ENCODE measurements at regions of chr22 and their contacts with region 1.

Region 1: DNA sequence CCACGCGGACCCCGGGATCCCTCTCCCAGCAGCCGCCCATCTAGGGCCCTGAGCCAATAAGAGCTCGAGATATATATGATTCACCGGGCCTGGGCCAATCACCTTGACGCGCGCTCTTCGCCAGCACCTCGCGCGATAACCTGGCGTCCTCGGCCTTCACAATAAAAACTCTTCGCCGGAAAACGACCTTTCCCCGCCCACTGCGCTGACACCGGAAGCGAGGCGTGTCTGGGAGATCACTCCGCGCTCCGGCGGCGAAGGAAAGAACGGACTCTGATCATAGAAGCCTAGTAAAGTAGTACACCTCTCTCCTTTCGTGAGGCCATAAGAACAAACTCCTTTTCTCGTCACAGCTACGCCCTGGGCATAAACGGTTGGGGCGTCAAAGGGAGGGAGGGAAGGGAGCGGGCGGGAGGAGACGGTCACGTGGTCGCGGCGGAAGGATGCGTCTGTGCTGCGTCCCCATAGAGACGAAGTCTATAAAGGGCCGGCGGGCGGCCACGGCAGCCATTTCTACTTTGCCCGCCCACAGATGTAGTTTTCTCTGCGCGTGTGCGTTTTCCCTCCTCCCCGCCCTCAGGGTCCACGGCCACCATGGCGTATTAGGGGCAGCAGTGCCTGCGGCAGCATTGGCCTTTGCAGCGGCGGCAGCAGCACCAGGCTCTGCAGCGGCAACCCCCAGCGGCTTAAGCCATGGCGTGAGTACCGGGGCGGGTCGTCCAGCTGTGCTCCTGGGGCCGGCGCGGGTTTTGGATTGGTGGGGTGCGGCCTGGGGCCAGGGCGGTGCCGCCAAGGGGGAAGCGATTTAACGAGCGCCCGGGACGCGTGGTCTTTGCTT is at the start of gene ATF4:
- DNase-seq: peak; percentile 93 to 99 (median 95)
- ATAC-seq: peak; percentile 89
- H3K4me3 ChIP-seq: peak within 1 kb of the TSS; percentile 98 to 99
- H3K4me3 Mint-ChIP-seq: peak within 1 kb of the TSS; percentile 98
- H3K27ac ChIP-seq: peak within 1 kb of the TSS; percentile 87 to 88
- H3K27ac Mint-ChIP-seq: peak within 1 kb of the TSS; percentile 99
- H3K4me1 ChIP-seq: peaks cover 48% of the 10 kb centered on the region
- H3K4me1 Mint-ChIP-seq: peaks cover 44% of the 10 kb centered on the region
- H3K27me3 ChIP-seq: no peaks in the 10 kb centered on the region
- H3K27me3 Mint-ChIP-seq: no peaks in the 10 kb centered on the region
- CTCF ChIP-seq: no peak
- total RNA-seq, gene ATF4: 327 to 329 TPM

Region 2: DNA sequence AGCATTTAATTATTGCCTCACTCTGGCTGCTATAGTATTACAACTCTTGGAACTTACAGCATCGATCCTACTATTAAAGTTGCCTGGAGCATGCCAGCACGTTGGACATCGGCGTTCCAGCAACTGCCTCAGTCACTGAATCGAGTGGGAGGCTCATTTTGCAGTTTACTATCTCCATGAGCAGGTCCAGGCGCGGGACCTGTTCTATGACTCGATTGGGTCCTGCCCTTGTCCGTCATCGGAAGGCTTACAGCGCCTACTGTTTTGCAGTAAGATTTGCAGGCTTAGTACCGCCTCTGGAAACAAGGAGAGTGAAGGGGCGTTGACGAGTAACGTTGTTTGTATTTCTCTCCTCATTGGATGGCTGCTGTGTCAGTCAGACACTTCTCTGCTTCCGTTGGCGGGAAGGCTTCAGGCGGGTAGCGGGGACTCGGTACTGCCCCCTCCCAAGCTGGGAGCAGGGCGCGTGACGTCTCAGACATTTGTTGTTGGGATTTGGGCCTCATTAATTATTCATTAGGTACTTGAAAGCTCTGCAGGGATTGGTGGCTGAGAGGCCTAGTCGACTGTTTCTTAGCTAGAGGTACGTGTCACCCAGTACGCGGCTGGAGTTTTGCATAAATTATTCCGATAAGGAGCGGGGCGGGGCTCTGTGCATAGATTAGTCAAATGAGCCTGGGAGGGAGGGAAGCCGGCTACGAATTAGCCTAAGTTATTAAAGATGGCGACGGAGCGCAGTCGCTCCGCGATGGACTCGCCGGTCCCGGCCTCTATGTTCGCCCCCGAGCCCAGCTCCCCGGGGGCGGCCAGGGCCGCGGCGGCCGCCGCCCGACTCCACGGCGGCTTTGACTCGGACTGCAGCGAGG is 814.8 kb before region 1 on chr22 and contains the start of gene GTPBP1:
- CTCF ChIA-PET with region 1: no interaction called
- POLR2A ChIA-PET with region 1: no interaction called
- intact Hi-C with region 1: loop called in 1 of 2 experiments (anchors 10 kb)
- DNase-seq: peak; percentile 91 to 100 (median 95)
- ATAC-seq: peak; percentile 76
- H3K4me3 ChIP-seq: peak within 1 kb of the TSS; percentile 63 to 84
- H3K4me3 Mint-ChIP-seq: peak within 1 kb of the TSS; percentile 93
- H3K27ac ChIP-seq: peak within 1 kb of the TSS; percentile 69 to 77
- H3K27ac Mint-ChIP-seq: peak within 1 kb of the TSS; percentile 95
- H3K4me1 ChIP-seq: peaks cover 47% of the 10 kb centered on the region
- H3K4me1 Mint-ChIP-seq: peaks cover 64% of the 10 kb centered on the region
- H3K27me3 ChIP-seq: no peaks in the 10 kb centered on the region
- H3K27me3 Mint-ChIP-seq: no peaks in the 10 kb centered on the region
- CTCF ChIP-seq: no peak
- total RNA-seq, gene GTPBP1: 341 to 346 TPM

Region 3: GRCh38 chr22:39170825-39171622 is 349.2 kb before region 1 on chr22:
- CTCF ChIA-PET with region 1: interaction called, 3 read pairs
- POLR2A ChIA-PET with region 1: interaction called, 3 read pairs
- intact Hi-C with region 1: loop called (anchors 2 to 5 kb)
- DNase-seq: peak; percentile 73 to 95 (median 85)
- ATAC-seq: peak; percentile 57
- H3K4me3 ChIP-seq: peak overlapping the region; percentile 26 to 28
- H3K4me3 Mint-ChIP-seq: peak overlapping the region; percentile 54
- H3K27ac ChIP-seq: peak overlapping the region; percentile 25 to 42
- H3K27ac Mint-ChIP-seq: peak overlapping the region; percentile 94
- H3K4me1 ChIP-seq: peaks cover 49% of the 10 kb centered on the region
- H3K4me1 Mint-ChIP-seq: peaks cover 47% of the 10 kb centered on the region
- H3K27me3 ChIP-seq: peaks cover 0 to 3% of the 10 kb centered on the region in 2 experiments
- H3K27me3 Mint-ChIP-seq: no peaks in the 10 kb centered on the region
- CTCF ChIP-seq: peak; percentile 98

Region 4: DNA sequence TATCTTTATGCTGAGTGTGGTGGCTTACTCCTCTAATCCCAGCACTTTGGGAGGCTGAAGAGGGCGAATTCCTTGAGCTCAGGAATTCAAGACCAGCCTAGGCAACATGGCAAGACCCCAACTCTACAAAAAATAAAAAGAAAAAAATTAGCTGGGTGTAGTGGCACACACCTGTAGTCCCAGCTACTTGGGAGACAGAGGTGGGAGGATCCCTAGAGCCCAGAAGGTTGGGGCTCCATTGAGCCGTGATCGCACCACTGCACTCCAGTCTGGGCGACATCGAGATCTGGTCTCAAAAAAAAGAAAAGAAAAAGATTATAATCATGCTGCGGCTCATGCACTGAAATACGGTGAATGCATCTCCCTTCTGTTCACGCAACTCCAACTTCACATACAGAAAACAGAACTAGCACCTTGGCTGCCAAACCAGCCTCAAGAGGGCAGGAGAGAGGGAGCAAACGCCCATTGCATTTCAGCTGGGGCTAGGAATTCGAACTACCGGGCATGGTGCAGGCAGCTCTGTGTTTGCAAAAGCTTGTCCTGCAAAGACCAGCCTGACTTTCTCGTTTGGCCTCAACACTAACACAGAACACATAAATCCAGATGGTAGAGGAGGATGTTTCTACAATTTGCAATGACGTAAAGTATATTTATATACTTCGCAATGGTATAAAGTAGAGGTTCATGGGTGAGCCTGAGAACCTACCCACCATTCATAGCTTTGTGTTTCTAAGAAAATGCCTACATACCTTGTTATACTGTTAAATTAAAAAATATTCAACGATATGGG is 176.8 kb before region 1 on chr22:
- CTCF ChIA-PET with region 1: interaction called, 7 read pairs
- POLR2A ChIA-PET with region 1: no interaction called
- intact Hi-C with region 1: loop called in 1 of 2 experiments (anchors 2 kb)
- DNase-seq: peak; percentile 32 to 76 (median 63)
- ATAC-seq: peak; percentile 91
- H3K4me3 ChIP-seq: no peak overlapping the region
- H3K4me3 Mint-ChIP-seq: no peak overlapping the region
- H3K27ac ChIP-seq: no peak overlapping the region
- H3K27ac Mint-ChIP-seq: no peak overlapping the region
- H3K4me1 ChIP-seq: no peaks in the 10 kb centered on the region
- H3K4me1 Mint-ChIP-seq: peaks cover 4% of the 10 kb centered on the region
- H3K27me3 ChIP-seq: no peaks in the 10 kb centered on the region
- H3K27me3 Mint-ChIP-seq: no peaks in the 10 kb centered on the region
- CTCF ChIP-seq: peak; percentile 60

Region 5: GRCh38 chr22:39490135-39490798 is 30.0 kb before region 1 on chr22:
- CTCF ChIA-PET with region 1: interaction called, 287 read pairs
- POLR2A ChIA-PET with region 1: interaction called, 15 read pairs
- intact Hi-C with region 1: loop called in 1 of 2 experiments (anchors 2 kb)
- DNase-seq: peak; percentile 58 to 89 (median 76)
- ATAC-seq: peak; percentile 99
- H3K4me3 ChIP-seq: no peak overlapping the region
- H3K4me3 Mint-ChIP-seq: peak overlapping the region; percentile 69
- H3K27ac ChIP-seq: no peak overlapping the region
- H3K27ac Mint-ChIP-seq: peak overlapping the region; percentile 67
- H3K4me1 ChIP-seq: peaks cover 7% of the 10 kb centered on the region
- H3K4me1 Mint-ChIP-seq: peaks cover 12% of the 10 kb centered on the region
- H3K27me3 ChIP-seq: no peaks in the 10 kb centered on the region
- H3K27me3 Mint-ChIP-seq: no peaks in the 10 kb centered on the region
- CTCF ChIP-seq: no peak

Region 6: GRCh38 chr22:39574779-39575551 is 54.7 kb after region 1 on chr22:
- CTCF ChIA-PET with region 1: no interaction called
- POLR2A ChIA-PET with region 1: no interaction called
- intact Hi-C with region 1: no loop called
- DNase-seq: no peak
- ATAC-seq: no peak
- H3K4me3 ChIP-seq: no peak overlapping the region
- H3K4me3 Mint-ChIP-seq: no peak overlapping the region
- H3K27ac ChIP-seq: no peak overlapping the region
- H3K27ac Mint-ChIP-seq: no peak overlapping the region
- H3K4me1 ChIP-seq: no peaks in the 10 kb centered on the region
- H3K4me1 Mint-ChIP-seq: no peaks in the 10 kb centered on the region
- H3K27me3 ChIP-seq: no peaks in the 10 kb centered on the region
- H3K27me3 Mint-ChIP-seq: peaks cover 8% of the 10 kb centered on the region
- CTCF ChIP-seq: no peak

Region 7: GRCh38 chr22:40024201-40025061 is 504.2 kb after region 1 on chr22:
- CTCF ChIA-PET with region 1: interaction called, 16 read pairs
- POLR2A ChIA-PET with region 1: no interaction called
- intact Hi-C with region 1: no loop called
- DNase-seq: peak; percentile 20 to 78 (median 64)
- ATAC-seq: peak; percentile 72
- H3K4me3 ChIP-seq: no peak overlapping the region
- H3K4me3 Mint-ChIP-seq: no peak overlapping the region
- H3K27ac ChIP-seq: no peak overlapping the region
- H3K27ac Mint-ChIP-seq: no peak overlapping the region
- H3K4me1 ChIP-seq: peaks cover 6% of the 10 kb centered on the region
- H3K4me1 Mint-ChIP-seq: peaks cover 5% of the 10 kb centered on the region
- H3K27me3 ChIP-seq: no peaks in the 10 kb centered on the region
- H3K27me3 Mint-ChIP-seq: no peaks in the 10 kb centered on the region
- CTCF ChIP-seq: peak; percentile 80

Region 8: GRCh38 chr22:41285820-41286638 is 1765.8 kb after region 1 on chr22 and contains the start of gene RANGAP1:
- CTCF ChIA-PET with region 1: no interaction called
- POLR2A ChIA-PET with region 1: no interaction called
- intact Hi-C with region 1: loop called in 1 of 2 experiments (anchors 5 kb)
- DNase-seq: peak; percentile 96 to 100 (median 98)
- ATAC-seq: peak; percentile 86
- H3K4me3 ChIP-seq: peak within 1 kb of the TSS; percentile 76 to 99
- H3K4me3 Mint-ChIP-seq: peak within 1 kb of the TSS; percentile 92
- H3K27ac ChIP-seq: peak within 1 kb of the TSS; percentile 87 to 95
- H3K27ac Mint-ChIP-seq: peak within 1 kb of the TSS; percentile 98
- H3K4me1 ChIP-seq: peaks cover 15% of the 10 kb centered on the region
- H3K4me1 Mint-ChIP-seq: peaks cover 32% of the 10 kb centered on the region
- H3K27me3 ChIP-seq: no peaks in the 10 kb centered on the region
- H3K27me3 Mint-ChIP-seq: no peaks in the 10 kb centered on the region
- CTCF ChIP-seq: no peak
- total RNA-seq, gene RANGAP1: 200 to 210 TPM

Measured in CD8-positive, alpha-beta T cell (primary cell).